SK-N-SH (cell line): ENCODE measurements at regions of chr20 and their contacts with region 1.

Region 1: DNA sequence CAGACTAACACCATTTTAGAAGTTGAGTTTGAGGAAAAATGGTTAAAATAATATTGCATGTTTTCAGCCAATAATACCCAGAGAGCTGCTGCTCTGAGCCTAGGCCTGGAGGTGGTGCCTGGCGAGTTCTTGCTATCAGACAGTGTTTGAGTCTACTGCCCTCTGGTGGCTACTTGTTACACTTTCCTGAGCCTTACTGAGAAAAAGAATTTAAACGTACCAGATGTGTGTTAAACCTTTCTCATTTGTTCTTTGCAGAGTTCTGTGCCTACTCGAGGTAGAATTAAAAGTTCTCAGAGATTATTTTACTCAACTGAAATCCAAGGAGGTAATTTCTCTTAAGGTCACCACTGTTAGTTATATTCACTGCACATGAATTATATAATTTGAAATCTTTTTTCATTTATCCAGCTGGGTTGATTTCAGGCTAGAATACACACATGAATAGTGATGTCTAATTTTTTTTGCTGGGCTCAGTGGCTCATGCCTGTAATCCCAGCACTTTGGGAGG is 38.2 kb downstream of the SHLD1 start:
- DNase-seq: peak; percentile 79
- H3K4me3 ChIP-seq: no peak overlapping the region; a peak in 1 of 4 replicates
- H3K27ac ChIP-seq: no peak overlapping the region
- H3K4me1 ChIP-seq: peaks cover 7 to 14% of the 10 kb centered on the region in 2 experiments; a peak in 3 of 4 replicates
- H3K27me3 ChIP-seq: no peaks in the 10 kb centered on the region
- CTCF ChIP-seq: peak; percentile 96
- EP300 ChIP-seq: 0 out of 4 replicates have a peak, but pooled peaks of 1 of the 2 experiments have one; percentile 23
- RAD21 ChIP-seq: peak; percentile 96

Region 2: GRCh38 chr20:5535125-5535771 is 253.2 kb before region 1 on chr20:
- CTCF ChIA-PET with region 1: interaction called, 61 read pairs
- POLR2A ChIA-PET with region 1: no interaction called
- DNase-seq: no peak
- H3K4me3 ChIP-seq: no peak overlapping the region
- H3K27ac ChIP-seq: no peak overlapping the region
- H3K4me1 ChIP-seq: no peaks in the 10 kb centered on the region
- H3K27me3 ChIP-seq: no peaks in the 10 kb centered on the region
- CTCF ChIP-seq: no peak
- EP300 ChIP-seq: no peak
- RAD21 ChIP-seq: no peak

Region 3: GRCh38 chr20:5550733-5551529 is 237.5 kb before region 1 on chr20:
- CTCF ChIA-PET with region 1: interaction called, 26 read pairs
- POLR2A ChIA-PET with region 1: no interaction called
- DNase-seq: peak; percentile 18
- H3K4me3 ChIP-seq: no peak overlapping the region
- H3K27ac ChIP-seq: no peak overlapping the region
- H3K4me1 ChIP-seq: peaks cover 0 to 6% of the 10 kb centered on the region in 2 experiments; a peak in 2 of 4 replicates
- H3K27me3 ChIP-seq: no peaks in the 10 kb centered on the region
- CTCF ChIP-seq: no peak
- EP300 ChIP-seq: no peak
- RAD21 ChIP-seq: no peak

Region 4: DNA sequence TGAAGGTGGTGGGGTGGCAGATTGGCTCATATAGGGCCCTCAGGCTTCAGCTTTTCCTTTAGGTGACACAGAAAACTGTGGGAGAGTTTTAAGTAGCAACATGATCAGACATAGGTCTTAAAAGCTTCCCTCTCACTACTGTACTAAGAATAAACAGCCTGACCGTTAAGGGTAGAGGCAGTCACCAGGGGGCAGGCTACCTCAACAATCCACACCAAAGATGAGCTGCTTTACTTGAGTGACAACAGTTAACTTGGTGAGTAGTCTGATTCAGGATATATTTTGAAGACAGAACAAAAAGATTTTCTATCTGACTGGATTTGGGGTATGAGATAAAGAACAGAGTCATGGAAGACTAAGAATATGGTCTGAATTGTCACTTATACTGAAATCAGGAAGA is 231.3 kb before region 1 on chr20:
- CTCF ChIA-PET with region 1: interaction called, 26 read pairs
- POLR2A ChIA-PET with region 1: no interaction called
- DNase-seq: peak; percentile 54
- H3K4me3 ChIP-seq: no peak overlapping the region; a peak in 1 of 4 replicates
- H3K27ac ChIP-seq: no peak overlapping the region
- H3K4me1 ChIP-seq: no peaks in the 10 kb centered on the region
- H3K27me3 ChIP-seq: no peaks in the 10 kb centered on the region
- CTCF ChIP-seq: peak; percentile 72
- EP300 ChIP-seq: no peak
- RAD21 ChIP-seq: peak; percentile 74

Region 5: DNA sequence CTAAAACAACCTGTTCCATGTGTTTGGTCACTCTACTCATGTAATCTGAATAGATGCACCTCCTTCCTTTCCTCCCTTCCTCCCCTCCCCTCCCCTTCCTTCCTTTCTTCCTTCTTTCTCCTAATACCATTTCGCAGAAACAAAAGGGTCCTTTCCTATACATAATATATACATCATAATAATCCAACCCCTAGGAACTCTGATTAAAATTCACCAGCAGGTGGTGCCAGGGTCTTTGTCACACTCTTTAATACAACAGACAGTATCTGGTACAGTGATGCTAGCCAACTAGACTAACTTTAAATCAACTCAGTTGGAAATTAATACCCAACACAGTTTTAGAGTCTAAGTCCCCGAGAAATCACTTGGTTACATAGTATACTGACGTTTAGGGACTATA is 219.4 kb before region 1 on chr20:
- CTCF ChIA-PET with region 1: interaction called, 90 read pairs
- POLR2A ChIA-PET with region 1: interaction called, 3 read pairs
- DNase-seq: peak; percentile 52
- H3K4me3 ChIP-seq: no peak overlapping the region
- H3K27ac ChIP-seq: no peak overlapping the region
- H3K4me1 ChIP-seq: no peaks in the 10 kb centered on the region
- H3K27me3 ChIP-seq: no peaks in the 10 kb centered on the region
- CTCF ChIP-seq: peak; percentile 68
- EP300 ChIP-seq: no peak
- RAD21 ChIP-seq: peak; percentile 87

Region 6: DNA sequence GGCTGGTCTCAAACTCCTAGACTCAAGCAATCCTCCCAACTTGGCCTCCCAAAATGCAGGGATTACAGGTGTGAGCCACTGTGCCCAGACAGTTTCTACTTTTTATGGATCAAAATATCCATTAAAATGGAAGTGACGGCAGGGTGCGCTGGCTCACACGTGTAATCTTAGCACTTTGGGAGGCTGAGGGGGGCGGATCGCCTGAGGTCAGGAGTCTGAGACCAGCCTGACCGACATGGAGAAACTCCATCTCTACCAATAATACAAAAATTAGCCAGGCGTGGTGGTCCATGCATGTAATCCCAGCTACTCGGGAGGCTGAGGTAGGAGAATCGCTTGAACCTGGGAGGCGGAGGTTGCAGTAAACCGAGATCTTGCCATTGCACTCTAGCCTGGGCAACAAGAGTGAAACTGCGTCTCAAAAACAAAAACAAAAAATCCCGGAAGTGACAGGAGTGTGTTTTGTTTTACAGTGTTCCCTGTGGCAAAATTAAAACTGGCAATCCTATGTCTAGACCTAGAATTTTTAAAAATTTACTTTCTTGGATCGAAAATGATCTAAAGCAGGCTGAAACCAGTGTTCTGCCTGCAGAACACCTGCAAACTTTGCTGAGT is 154.6 kb before region 1 on chr20:
- CTCF ChIA-PET with region 1: no interaction called
- POLR2A ChIA-PET with region 1: no interaction called
- DNase-seq: no peak
- H3K4me3 ChIP-seq: no peak overlapping the region
- H3K27ac ChIP-seq: no peak overlapping the region
- H3K4me1 ChIP-seq: no peaks in the 10 kb centered on the region
- H3K27me3 ChIP-seq: no peaks in the 10 kb centered on the region
- CTCF ChIP-seq: no peak
- EP300 ChIP-seq: no peak
- RAD21 ChIP-seq: no peak

Region 7: GRCh38 chr20:5881714-5882113 is 93.3 kb after region 1 on chr20:
- CTCF ChIA-PET with region 1: no interaction called
- POLR2A ChIA-PET with region 1: no interaction called
- DNase-seq: no peak
- H3K4me3 ChIP-seq: no peak overlapping the region
- H3K27ac ChIP-seq: no peak overlapping the region
- H3K4me1 ChIP-seq: peaks cover 0 to 6% of the 10 kb centered on the region in 2 experiments; a peak in 1 of 4 replicates
- H3K27me3 ChIP-seq: peaks cover 3% of the 10 kb centered on the region; the same call in 1 of the 2 replicates
- CTCF ChIP-seq: no peak
- EP300 ChIP-seq: no peak
- RAD21 ChIP-seq: no peak

Region 8: GRCh38 chr20:5996765-5997164 is 208.3 kb after region 1 on chr20:
- CTCF ChIA-PET with region 1: no interaction called
- POLR2A ChIA-PET with region 1: no interaction called
- DNase-seq: no peak
- H3K4me3 ChIP-seq: no peak overlapping the region
- H3K27ac ChIP-seq: no peak overlapping the region
- H3K4me1 ChIP-seq: peaks cover 0 to 6% of the 10 kb centered on the region in 2 experiments; a peak in 3 of 4 replicates
- H3K27me3 ChIP-seq: no peaks in the 10 kb centered on the region
- CTCF ChIP-seq: no peak
- EP300 ChIP-seq: no peak
- RAD21 ChIP-seq: no peak